ENCODE measurements at regions of chr16 and their contacts with region 1.

Region 1: GRCh38 chr16:77236063-77236511 is 36.9 kb downstream of the SYCE1L start:
- DNase-seq: peak; percentile 90
- ATAC-seq: peak; percentile 99

Region 2: GRCh38 chr16:76955629-76956028 is 280.5 kb before region 1 on chr16:
- intact Hi-C with region 1: no loop called
- DNase-seq: no peak
- ATAC-seq: no peak

Region 3: DNA sequence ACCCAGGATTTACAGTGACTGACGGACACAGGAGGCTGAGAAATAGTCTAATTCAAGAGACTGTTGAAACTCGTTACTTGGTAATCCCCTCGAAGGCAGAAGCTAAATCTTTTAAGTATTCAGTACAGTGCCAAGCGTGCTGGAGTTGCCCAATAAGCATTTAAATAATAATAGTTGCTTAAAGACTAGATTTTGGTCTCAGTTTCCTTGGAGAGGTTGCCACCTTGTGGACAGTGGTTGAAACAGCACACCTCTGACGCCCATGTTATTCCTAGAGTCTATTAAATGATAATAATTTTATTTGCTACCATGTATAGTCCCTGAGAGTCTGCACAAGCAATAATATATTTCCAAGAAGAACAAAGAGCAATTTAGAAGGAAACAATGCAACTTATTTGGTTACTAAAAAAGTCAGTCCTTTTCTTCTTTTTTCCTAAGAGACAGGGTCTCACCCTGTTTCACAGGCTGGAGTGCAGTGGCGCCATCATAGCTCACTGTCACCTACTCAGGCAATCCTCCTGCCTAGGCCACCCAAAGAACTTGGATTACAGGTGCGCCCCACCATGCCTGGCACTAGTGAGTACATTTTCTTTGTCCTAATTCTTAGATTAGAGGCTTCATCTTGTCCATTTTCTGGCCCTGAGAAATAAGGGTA is 348.2 kb after region 1 on chr16:
- intact Hi-C with region 1: loop called (anchors 5 kb)
- DNase-seq: no peak
- ATAC-seq: peak; percentile 37

Measured in left ventricle myocardium superior (tissue), 1 donor.